ENCODE measurements at regions of chr3 and their contacts with region 1.

Region 1: GRCh38 chr3:100893590-100893989 is 99.6 kb downstream of the ABI3BP start:
- DNase-seq: peak; percentile 10 to 53
- H3K4me3 ChIP-seq: no peak overlapping the region
- H3K27ac ChIP-seq: no peak overlapping the region
- H3K4me1 ChIP-seq: no peaks in the 10 kb centered on the region
- H3K27me3 ChIP-seq: no peaks in the 10 kb centered on the region
- CTCF ChIP-seq: peak; percentile 66 to 82 (median 75)
- EP300 ChIP-seq: no peak
- POLR2A ChIP-seq: no peak
- RAD21 ChIP-seq: peak; percentile 92 to 95

Region 2: GRCh38 chr3:101195951-101196713 is 302.5 kb after region 1 on chr3:
- CTCF ChIA-PET with region 1: interaction called, 43 read pairs
- POLR2A ChIA-PET with region 1: no interaction called
- DNase-seq: no peak
- H3K4me3 ChIP-seq: no peak overlapping the region
- H3K27ac ChIP-seq: no peak overlapping the region
- H3K4me1 ChIP-seq: no peaks in the 10 kb centered on the region
- H3K27me3 ChIP-seq: no peaks in the 10 kb centered on the region
- CTCF ChIP-seq: peak in 2 of 3 experiments; percentile 47; a peak in 2 of 4 replicates
- EP300 ChIP-seq: no peak
- POLR2A ChIP-seq: no peak
- RAD21 ChIP-seq: peak; percentile 83 to 87